Prostate gland (tissue), 2 donors: ENCODE measurements at regions of chr6 and their contacts with region 1.

Region 1: GRCh38 chr6:122184401-122184827 is 215.0 kb upstream of the HSF2 start:
- DNase-seq: no peak
- H3K4me3 ChIP-seq: no peak overlapping the region
- H3K27ac ChIP-seq: no peak overlapping the region
- H3K4me1 ChIP-seq: no peaks in the 10 kb centered on the region
- H3K27me3 ChIP-seq: no peaks in the 10 kb centered on the region
- CTCF ChIP-seq: peak in 2 of 4 experiments; percentile 61 to 66
- POLR2A ChIP-seq: no peak

Region 2: GRCh38 chr6:121055572-121056163 is 1128.7 kb before region 1 on chr6:
- intact Hi-C with region 1: loop called (anchors 10 kb)
- DNase-seq: no peak
- H3K4me3 ChIP-seq: no peak overlapping the region
- H3K27ac ChIP-seq: no peak overlapping the region
- H3K4me1 ChIP-seq: no peaks in the 10 kb centered on the region
- H3K27me3 ChIP-seq: no peaks in the 10 kb centered on the region
- CTCF ChIP-seq: peak; percentile 16 to 61 (median 56)
- POLR2A ChIP-seq: no peak

Region 3: GRCh38 chr6:121334299-121335086 is 849.9 kb before region 1 on chr6 and contains the start of gene TBC1D32:
- intact Hi-C with region 1: loop called (anchors 10 kb)
- DNase-seq: peak; percentile 85
- H3K4me3 ChIP-seq: peak within 1 kb of the TSS; percentile 63 to 65
- H3K27ac ChIP-seq: peak within 1 kb of the TSS; percentile 98 to 99
- H3K4me1 ChIP-seq: no peaks in the 10 kb centered on the region
- H3K27me3 ChIP-seq: no peaks in the 10 kb centered on the region
- CTCF ChIP-seq: peak in 2 of 4 experiments; percentile 26 to 33
- POLR2A ChIP-seq: peak; percentile 43
- total RNA-seq, gene TBC1D32: 10.7 to 11.1 TPM

Region 4: GRCh38 chr6:121430514-121431460 is 753.6 kb before region 1 on chr6:
- intact Hi-C with region 1: loop called (anchors 2 kb)
- DNase-seq: no peak
- H3K4me3 ChIP-seq: no peak overlapping the region
- H3K27ac ChIP-seq: peak overlapping the region in 1 of 2 donors; percentile 13
- H3K4me1 ChIP-seq: no peaks in the 10 kb centered on the region
- H3K27me3 ChIP-seq: no peaks in the 10 kb centered on the region
- CTCF ChIP-seq: peak; percentile 16 to 87 (median 69)
- POLR2A ChIP-seq: no peak

Region 5: GRCh38 chr6:121780325-121781313 is 403.8 kb before region 1 on chr6:
- intact Hi-C with region 1: loop called (anchors 5 kb)
- DNase-seq: peak; percentile 83
- H3K4me3 ChIP-seq: no peak overlapping the region
- H3K27ac ChIP-seq: peak overlapping the region; percentile 54 to 55
- H3K4me1 ChIP-seq: no peaks in the 10 kb centered on the region
- H3K27me3 ChIP-seq: no peaks in the 10 kb centered on the region
- CTCF ChIP-seq: no peak
- POLR2A ChIP-seq: no peak

Region 6: GRCh38 chr6:121851056-121851455 is 333.4 kb before region 1 on chr6:
- intact Hi-C with region 1: loop called (anchors 10 kb)
- DNase-seq: no peak
- H3K4me3 ChIP-seq: no peak overlapping the region
- H3K27ac ChIP-seq: no peak overlapping the region
- H3K4me1 ChIP-seq: no peaks in the 10 kb centered on the region
- H3K27me3 ChIP-seq: no peaks in the 10 kb centered on the region
- CTCF ChIP-seq: no peak
- POLR2A ChIP-seq: no peak

Region 7: DNA sequence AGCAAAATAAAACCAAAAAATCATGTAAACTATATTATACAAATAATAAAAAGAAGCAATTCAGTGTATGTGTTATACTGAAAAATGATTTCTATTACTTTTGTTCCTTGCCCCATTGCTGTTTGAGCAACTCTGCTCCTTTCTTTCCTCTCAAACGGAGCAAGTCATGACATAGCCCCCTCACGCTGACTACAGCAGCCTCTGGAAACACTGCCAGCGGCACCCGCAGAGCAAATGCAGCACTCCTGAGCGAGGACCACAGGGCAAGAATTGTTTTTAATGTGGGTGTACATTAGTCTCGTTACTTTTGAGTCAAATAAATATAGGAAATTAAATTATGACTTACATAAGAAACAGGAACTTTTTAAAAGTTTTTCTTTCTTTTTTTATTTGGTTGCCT is 135.1 kb before region 1 on chr6:
- intact Hi-C with region 1: loop called (anchors 10 kb)
- DNase-seq: peak; percentile 21
- H3K4me3 ChIP-seq: no peak overlapping the region
- H3K27ac ChIP-seq: no peak overlapping the region
- H3K4me1 ChIP-seq: no peaks in the 10 kb centered on the region
- H3K27me3 ChIP-seq: no peaks in the 10 kb centered on the region
- CTCF ChIP-seq: no peak
- POLR2A ChIP-seq: no peak

Region 8: DNA sequence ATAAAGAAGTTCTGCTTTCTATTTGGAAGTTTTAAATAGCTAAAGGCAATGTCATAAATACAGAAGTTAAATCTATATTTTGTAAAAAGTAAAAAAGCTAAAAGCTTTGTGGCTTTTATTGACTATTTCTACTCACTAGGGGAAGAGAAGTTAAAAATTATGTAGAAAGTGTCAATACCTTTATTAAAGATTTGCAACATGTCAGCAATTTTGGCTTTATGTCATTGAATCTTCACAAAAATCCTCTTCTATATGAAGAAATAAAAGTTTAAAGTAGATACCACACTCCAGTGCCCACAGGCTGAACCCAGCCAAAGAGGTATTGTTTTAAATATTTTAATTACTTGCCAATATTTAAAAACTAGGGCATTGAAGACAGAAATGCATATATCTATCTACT is 54.4 kb after region 1 on chr6:
- intact Hi-C with region 1: no loop called
- DNase-seq: no peak
- H3K4me3 ChIP-seq: no peak overlapping the region
- H3K27ac ChIP-seq: no peak overlapping the region
- H3K4me1 ChIP-seq: no peaks in the 10 kb centered on the region
- H3K27me3 ChIP-seq: no peaks in the 10 kb centered on the region
- CTCF ChIP-seq: no peak
- POLR2A ChIP-seq: no peak

Region 9: GRCh38 chr6:122352981-122353664 is 168.7 kb after region 1 on chr6:
- intact Hi-C with region 1: no loop called
- DNase-seq: no peak
- H3K4me3 ChIP-seq: no peak overlapping the region
- H3K27ac ChIP-seq: no peak overlapping the region
- H3K4me1 ChIP-seq: no peaks in the 10 kb centered on the region
- H3K27me3 ChIP-seq: no peaks in the 10 kb centered on the region
- CTCF ChIP-seq: no peak
- POLR2A ChIP-seq: no peak

Region 10: GRCh38 chr6:122365775-122366403 is 181.5 kb after region 1 on chr6:
- intact Hi-C with region 1: no loop called
- DNase-seq: no peak
- H3K4me3 ChIP-seq: no peak overlapping the region
- H3K27ac ChIP-seq: no peak overlapping the region
- H3K4me1 ChIP-seq: no peaks in the 10 kb centered on the region
- H3K27me3 ChIP-seq: no peaks in the 10 kb centered on the region
- CTCF ChIP-seq: no peak
- POLR2A ChIP-seq: no peak